GM13977 (cell line): ENCODE measurements at regions of chr1 and their contacts with region 1.

Region 1: GRCh38 chr1:241834733-241835377 is 13.1 kb upstream of the EXO1 start:
- DNase-seq: no peak
- CTCF ChIP-seq: peak; percentile 70

Region 2: DNA sequence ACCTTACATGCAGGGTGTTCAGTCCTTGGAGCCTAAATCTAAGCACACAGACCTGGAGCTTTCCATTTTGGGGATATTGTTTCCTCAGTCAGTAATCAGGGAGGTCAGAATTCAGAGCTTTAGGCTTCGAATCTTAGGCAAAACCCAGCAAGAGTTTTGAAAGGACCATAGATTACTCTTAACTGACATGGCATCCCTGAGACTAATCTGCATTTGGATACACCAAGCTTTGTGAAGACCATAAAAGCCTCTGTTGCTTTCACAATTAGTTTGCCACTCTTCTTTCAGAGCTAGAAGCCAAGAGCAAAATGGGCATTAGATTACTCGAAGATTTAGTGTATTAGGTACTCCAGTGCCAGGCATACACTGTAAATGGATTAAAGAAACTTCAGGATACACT is 1091.2 kb before region 1 on chr1:
- in situ Hi-C with region 1: no loop called
- DNase-seq: no peak
- CTCF ChIP-seq: no peak

Region 3: DNA sequence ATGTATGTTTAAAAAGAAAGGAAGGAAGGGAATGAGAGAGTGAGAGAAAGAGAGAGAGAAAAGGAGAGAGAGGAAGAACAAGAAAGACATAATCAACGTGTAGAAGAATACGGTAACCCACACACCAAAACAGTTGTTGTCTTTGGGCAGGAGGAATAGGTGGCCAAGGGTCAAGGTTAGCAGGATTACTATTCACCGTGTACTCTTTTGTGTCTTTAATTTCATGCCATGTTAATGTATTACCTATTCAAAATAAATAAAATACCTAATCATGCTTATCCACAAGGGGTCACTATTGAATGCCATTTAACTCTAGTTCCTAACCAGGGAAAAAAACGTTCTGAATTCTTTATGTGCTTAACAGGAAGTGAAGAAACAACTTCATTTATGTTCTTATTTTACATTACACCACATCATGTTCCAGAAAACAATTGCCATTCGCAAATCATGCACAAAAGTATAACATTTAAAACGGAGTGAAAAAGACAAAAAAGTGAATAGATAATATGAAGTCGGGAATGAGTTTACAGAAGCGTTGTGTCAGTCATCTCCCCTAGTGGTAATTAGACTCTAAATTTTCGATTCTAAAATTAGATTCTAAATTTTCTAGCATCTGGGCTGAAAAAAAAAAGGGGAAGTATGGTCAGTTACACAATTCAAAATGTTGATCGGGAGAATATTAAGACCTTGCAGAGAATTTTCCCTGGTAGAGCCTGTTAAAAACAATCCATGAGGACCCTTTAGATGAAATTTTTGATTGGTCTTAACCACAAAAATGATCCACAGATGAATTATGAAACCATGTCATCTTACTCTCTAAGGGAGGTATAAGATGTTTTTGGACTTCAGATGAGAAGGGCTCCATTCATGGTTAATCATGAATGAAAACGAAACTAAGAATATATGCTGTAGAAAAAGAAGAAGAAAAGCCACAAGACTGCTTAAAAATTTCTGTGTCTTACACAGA is 303.4 kb before region 1 on chr1:
- in situ Hi-C with region 1: loop called (anchors 10 kb)
- DNase-seq: no peak
- CTCF ChIP-seq: peak; percentile 44

Region 4: GRCh38 chr1:241639623-241640028 is 195.2 kb before region 1 on chr1:
- in situ Hi-C with region 1: loop called (anchors 10 kb)
- DNase-seq: no peak
- CTCF ChIP-seq: no peak

Region 5: DNA sequence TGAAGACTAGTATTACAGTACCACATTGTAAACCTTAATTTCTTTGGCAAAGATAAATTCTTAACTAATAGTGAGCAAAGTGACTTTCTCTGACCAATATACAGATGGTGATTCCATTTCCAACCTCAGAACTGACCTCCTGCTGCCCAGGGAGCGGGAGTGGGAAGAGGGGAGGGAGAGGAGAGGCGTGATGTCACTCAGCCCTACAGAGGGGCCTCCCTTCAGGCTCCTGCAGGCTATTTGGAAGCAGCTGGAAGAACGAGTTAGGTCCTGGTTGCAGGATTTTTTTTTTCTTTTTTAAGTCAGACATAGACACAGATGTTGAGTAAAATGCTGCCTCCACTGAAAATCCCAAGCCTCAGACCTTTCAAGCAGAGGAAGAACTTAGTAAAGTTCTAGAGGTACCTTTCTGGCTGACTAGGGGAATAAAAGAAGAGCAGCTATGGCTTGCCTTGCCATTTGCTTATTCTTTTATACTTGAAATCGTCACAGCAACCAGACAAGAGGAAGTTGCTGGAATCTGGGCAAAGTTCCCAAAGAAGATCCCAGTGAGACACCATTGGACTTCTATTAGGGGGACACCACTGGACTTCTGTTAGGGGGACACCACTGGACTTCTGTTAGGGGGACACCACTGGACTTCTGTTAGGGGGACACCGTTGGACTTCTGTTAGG is 67.7 kb after region 1 on chr1:
- in situ Hi-C with region 1: no loop called
- DNase-seq: no peak
- CTCF ChIP-seq: no peak

Region 6: DNA sequence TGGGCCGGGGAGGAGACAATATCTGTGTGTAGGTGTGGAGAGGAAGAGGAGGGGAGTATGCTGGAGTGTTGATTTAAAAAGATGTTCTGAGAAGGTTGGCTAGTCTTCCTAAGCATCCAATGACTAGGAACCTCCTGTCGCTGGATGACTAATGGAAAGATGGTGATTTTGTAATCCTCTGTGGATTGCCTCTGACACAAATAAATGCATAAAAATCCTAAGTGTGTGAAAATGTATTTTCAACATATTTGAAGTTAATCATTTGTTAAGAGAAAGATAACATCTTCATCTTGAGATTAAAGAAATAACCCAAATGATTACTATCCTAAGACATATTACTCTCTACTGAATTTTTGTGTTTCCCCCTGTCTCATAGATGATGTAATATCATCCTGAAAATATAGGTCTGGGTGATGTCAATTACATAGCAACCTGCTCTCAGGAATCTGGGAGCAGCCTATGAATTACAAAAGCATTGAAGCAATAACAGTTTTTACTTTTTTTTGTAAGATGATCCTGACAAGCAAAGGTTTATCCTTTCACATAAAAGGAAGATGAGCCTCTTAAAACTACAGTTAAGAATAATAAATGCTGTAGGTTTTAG is 384.5 kb after region 1 on chr1:
- in situ Hi-C with region 1: no loop called
- DNase-seq: no peak
- CTCF ChIP-seq: no peak